Activated T-helper 1 cell treated with anti-CD3 and anti-CD28 coated beads, Interleukin-12 subunit alpha, Interleukin-12 subunit beta, Interleukin-2, Interleukin-4 antibody, amounts not matched to agents 30 ng/mL and 10 ng/mL and 1 ng/mL, durations not matched to agents 14 hours and 24 hours and 36 hours (primary cell): ENCODE measurements at regions of chr7 and their contacts with region 1.

Region 1: DNA sequence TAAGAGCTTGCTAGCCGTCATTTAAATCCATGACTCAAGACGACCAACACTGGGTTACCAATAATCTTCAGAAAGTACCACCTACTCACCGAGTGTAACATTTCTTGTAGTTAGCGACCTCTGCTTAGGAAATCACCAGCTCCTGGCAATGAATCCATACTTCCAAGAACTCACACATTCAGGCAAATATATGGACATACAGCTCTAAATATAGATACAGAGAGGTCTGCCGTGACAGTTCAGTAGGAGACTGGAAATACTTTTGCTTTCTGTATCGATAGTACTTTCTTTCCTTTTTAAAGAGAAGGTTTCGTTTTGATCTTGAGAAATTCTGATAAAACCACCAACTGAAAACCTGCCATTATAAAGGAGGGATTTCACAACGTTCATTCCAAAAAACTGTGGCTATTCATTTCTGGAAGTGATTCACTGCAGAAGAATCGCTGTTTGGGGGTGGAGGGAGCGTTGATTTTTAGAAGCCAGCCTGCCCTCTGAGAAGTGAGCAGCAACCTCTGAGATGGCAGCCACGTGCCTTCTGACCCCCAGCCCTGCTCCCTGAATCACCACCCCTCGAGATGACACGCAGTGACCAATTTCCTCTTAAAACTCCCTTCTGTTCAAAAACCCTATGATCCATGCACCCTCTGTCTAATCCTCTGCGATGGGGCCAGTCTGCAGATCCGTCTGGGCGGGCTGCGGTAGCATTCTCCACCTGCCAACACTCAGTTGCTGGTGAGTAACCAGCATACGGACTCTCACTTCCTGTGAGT is 179.0 kb upstream of the KLF14 start:
- DNase-seq: peak; percentile 79
- H3K4me3 Mint-ChIP-seq: peak overlapping the region; percentile 77
- H3K27ac Mint-ChIP-seq: peak overlapping the region; percentile 92
- H3K4me1 Mint-ChIP-seq: peaks cover 93% of the 10 kb centered on the region
- H3K27me3 Mint-ChIP-seq: no peaks in the 10 kb centered on the region

Region 2: DNA sequence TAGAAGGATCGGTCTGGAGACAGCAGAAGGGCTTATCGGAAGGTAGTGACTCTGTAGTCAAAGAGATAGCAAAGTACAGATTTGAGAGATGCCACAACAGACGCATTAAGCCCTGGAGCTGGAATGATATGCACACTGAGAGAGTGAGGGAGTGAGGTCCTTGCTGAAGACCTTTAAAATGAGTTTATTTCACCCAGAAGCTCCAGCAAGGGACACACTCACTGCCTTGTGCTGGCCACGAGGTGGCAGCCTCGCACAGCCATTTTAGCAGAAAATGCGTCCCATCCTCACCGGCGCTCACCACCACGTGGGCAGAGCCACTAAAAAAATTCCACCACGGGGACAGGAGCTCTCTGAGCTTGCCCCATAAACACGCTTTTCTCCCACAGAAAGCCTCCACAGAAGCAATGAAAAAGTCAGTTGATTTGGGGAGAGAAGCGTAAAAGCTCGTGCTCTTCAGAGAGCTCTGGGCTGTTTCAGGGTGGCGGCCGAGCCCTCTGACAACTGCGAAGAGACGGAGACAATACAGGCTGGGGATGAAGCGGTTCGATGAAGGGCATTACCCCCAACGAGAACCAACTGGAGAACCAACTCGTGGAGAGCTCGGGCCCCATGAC is 16.0 kb before region 1 on chr7:
- intact Hi-C with region 1: loop called (anchors 1 kb)
- DNase-seq: peak; percentile 53
- H3K4me3 Mint-ChIP-seq: peak overlapping the region; percentile 5
- H3K27ac Mint-ChIP-seq: peak overlapping the region; percentile 89
- H3K4me1 Mint-ChIP-seq: peaks cover 90% of the 10 kb centered on the region
- H3K27me3 Mint-ChIP-seq: no peaks in the 10 kb centered on the region

Region 3: DNA sequence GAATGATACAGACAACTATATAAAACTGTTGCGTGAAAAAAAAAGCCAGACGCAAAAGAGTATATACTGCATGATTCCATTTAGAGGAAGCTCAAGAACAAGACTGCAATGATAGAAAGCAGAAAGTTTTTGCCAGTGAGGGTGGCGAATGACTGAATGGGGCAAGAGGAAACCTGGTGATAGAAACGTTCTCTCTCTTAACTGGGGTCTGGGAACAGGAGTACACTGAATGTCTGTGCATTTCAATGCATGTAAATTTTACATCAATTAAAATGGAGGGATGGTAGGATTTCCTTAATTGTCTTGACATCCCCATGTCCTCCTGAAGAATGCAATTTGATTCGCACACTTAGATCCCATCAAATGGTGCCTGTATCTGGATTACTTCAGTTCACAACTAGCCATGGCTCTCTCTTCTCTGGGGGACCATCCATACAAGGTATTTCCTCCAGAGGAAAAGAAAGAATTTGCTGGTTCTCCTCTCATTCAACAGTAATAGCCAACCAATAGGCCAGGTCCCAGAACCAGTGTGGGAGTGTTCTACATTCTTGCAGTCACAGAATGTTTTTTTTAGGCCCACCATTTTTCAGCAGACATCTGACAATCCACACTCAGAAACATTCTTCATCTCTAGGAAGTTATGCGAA is 42.0 kb after region 1 on chr7:
- intact Hi-C with region 1: no loop called
- DNase-seq: no peak
- H3K4me3 Mint-ChIP-seq: peak overlapping the region; percentile 92
- H3K27ac Mint-ChIP-seq: peak overlapping the region; percentile 89
- H3K4me1 Mint-ChIP-seq: peaks cover 5% of the 10 kb centered on the region
- H3K27me3 Mint-ChIP-seq: no peaks in the 10 kb centered on the region

Region 4: GRCh38 chr7:130970696-130971095 is 57.6 kb after region 1 on chr7:
- intact Hi-C with region 1: loop called (anchors 1 kb)
- DNase-seq: no peak
- H3K4me3 Mint-ChIP-seq: peak overlapping the region; percentile 37
- H3K27ac Mint-ChIP-seq: peak overlapping the region; percentile 94
- H3K4me1 Mint-ChIP-seq: peaks cover 76% of the 10 kb centered on the region
- H3K27me3 Mint-ChIP-seq: no peaks in the 10 kb centered on the region

Region 5: DNA sequence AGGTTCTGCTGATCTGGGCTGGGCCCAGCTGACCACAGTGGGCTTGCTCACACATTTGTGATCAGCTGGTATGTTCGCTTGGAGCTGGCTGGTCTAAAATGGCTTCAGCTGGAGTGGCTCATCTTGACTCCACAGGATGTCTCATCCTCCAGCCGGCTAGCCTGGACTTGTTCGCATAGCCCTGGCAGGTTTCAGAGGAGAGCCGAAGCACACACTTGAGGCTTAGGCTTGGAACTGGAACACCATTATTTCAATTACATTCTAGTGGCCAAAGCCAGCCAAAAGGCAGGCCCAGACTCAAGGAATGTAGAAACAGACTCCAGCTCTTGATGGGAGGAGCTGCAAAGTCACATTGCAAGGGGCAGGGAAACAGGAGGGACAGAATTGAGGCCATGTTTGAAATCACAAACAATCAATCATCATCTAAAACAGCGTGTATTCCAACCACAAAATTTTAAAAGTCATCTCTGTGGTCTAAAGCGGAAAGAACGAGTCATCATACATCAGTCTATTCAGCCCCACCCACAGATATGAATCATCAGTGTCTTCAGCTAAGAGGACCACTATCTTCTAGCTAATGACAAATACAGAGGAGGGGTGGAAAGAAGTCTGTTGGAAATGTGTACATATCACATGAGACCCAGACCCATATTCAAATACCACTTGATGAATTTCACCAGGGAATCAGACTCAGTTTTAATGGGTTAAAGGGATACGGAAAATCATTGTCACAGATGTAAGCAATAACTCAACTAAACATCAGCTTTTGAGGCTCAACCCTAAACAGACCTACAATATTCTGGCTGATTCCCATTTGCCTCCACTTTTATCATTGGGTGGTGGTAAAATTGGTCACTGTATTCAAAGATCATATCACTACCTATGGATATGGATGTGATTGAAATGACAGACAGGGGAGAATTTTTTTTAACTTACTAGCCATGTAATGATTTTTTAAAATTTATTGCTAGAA is 275.6 kb after region 1 on chr7:
- intact Hi-C with region 1: loop called (anchors 1 kb)
- DNase-seq: peak; percentile 59
- H3K4me3 Mint-ChIP-seq: peak overlapping the region; percentile 52
- H3K27ac Mint-ChIP-seq: peak overlapping the region; percentile 91
- H3K4me1 Mint-ChIP-seq: peaks cover 59% of the 10 kb centered on the region
- H3K27me3 Mint-ChIP-seq: no peaks in the 10 kb centered on the region